IMR-90 (cell line): ENCODE measurements at regions of chr1 and their contacts with region 1.

Region 1: GRCh38 chr1:151254217-151255213 is at the start of gene PSMD4:
- DNase-seq: peak; percentile 96
- ATAC-seq: peak; percentile 92
- H3K4me3 ChIP-seq: peak within 1 kb of the TSS; percentile 67
- H3K27ac ChIP-seq: peak within 1 kb of the TSS; percentile 81
- H3K4me1 ChIP-seq: peaks cover 6% of the 10 kb centered on the region
- H3K27me3 ChIP-seq: no peaks in the 10 kb centered on the region
- CTCF ChIP-seq: no peak
- POLR2A ChIP-seq: peak; percentile 91
- RAD21 ChIP-seq: no peak
- total RNA-seq, gene PSMD4: 289 and 349 TPM in 2 replicates

Region 2: DNA sequence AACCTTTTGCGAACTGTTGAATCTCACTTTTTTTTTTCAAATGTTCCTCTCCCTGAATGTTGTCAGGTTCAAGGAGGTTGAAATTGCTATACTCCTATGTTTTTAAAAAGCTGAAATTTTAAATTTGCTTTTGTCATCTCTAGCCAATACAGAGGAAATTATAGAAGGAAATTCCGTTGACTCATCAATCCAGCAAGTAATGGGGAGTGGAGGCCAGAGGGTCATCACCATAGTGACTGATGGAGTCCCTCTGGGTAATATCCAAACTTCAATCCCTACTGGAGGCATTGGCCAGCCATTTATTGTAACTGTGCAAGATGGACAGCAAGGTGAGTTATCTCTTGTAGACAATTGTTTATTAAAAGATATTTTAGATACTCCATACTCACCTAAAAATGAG is 147.6 kb before region 1 on chr1:
- CTCF ChIA-PET with region 1: interaction called, 3 read pairs
- POLR2A ChIA-PET with region 1: no interaction called
- dilution Hi-C with region 1: no loop called
- in situ Hi-C with region 1: no loop called
- intact Hi-C with region 1: loop called (anchors 10 kb)
- DNase-seq: peak; percentile 68
- ATAC-seq: peak; percentile 71; the same call in 1 of the 2 replicates
- H3K4me3 ChIP-seq: no peak overlapping the region
- H3K27ac ChIP-seq: no peak overlapping the region
- H3K4me1 ChIP-seq: no peaks in the 10 kb centered on the region
- H3K27me3 ChIP-seq: no peaks in the 10 kb centered on the region
- CTCF ChIP-seq: no peak
- POLR2A ChIP-seq: no peak
- RAD21 ChIP-seq: no peak

Region 3: GRCh38 chr1:151198255-151199127 is 56.0 kb before region 1 on chr1 and contains the start of gene PIP5K1A:
- CTCF ChIA-PET with region 1: interaction called, 4 read pairs
- POLR2A ChIA-PET with region 1: no interaction called
- dilution Hi-C with region 1: no loop called
- in situ Hi-C with region 1: loop called (anchors 5 kb)
- intact Hi-C with region 1: loop called (anchors 1 kb)
- DNase-seq: peak; percentile 97
- ATAC-seq: peak; percentile 86
- H3K4me3 ChIP-seq: peak within 1 kb of the TSS; percentile 98
- H3K27ac ChIP-seq: peak within 1 kb of the TSS; percentile 96
- H3K4me1 ChIP-seq: peaks cover 5% of the 10 kb centered on the region; the same call in 1 of the 2 replicates
- H3K27me3 ChIP-seq: no peaks in the 10 kb centered on the region
- CTCF ChIP-seq: no peak
- POLR2A ChIP-seq: peak; percentile 88
- RAD21 ChIP-seq: no peak
- total RNA-seq, gene PIP5K1A: 52.5 and 59.1 TPM in 2 replicates

Region 4: DNA sequence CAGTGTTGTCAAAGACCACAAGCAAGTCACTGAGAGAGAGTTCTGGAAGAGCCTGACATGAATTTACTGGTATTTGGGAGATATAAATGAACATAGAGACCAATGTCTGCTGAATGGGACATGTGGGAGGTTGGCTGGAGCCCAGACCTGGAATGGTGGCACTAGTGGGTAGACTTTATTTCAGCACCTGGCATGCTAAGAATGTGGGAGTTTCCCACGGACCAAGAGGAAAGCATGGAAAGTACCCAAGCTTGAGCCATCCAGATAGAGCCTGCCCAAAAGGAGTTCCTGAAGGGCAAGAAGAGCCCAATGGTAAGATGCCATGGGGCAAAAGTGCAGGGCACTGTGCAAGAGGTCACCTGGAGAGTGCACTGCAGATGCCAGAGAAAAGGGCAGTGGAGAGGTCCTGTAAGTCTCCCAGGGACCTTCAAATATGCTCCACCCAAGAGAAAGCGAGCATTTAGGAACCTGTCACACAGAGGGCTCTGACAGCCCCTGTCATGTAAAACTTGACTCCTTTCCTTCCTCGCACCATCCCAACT is 19.5 kb after region 1 on chr1:
- CTCF ChIA-PET with region 1: no interaction called
- POLR2A ChIA-PET with region 1: interaction called, 21 read pairs
- dilution Hi-C with region 1: no loop called
- in situ Hi-C with region 1: no loop called
- intact Hi-C with region 1: no loop called
- DNase-seq: no peak
- ATAC-seq: no peak
- H3K4me3 ChIP-seq: no peak overlapping the region
- H3K27ac ChIP-seq: no peak overlapping the region
- H3K4me1 ChIP-seq: no peaks in the 10 kb centered on the region
- H3K27me3 ChIP-seq: no peaks in the 10 kb centered on the region
- CTCF ChIP-seq: no peak
- POLR2A ChIP-seq: no peak
- RAD21 ChIP-seq: no peak

Region 5: DNA sequence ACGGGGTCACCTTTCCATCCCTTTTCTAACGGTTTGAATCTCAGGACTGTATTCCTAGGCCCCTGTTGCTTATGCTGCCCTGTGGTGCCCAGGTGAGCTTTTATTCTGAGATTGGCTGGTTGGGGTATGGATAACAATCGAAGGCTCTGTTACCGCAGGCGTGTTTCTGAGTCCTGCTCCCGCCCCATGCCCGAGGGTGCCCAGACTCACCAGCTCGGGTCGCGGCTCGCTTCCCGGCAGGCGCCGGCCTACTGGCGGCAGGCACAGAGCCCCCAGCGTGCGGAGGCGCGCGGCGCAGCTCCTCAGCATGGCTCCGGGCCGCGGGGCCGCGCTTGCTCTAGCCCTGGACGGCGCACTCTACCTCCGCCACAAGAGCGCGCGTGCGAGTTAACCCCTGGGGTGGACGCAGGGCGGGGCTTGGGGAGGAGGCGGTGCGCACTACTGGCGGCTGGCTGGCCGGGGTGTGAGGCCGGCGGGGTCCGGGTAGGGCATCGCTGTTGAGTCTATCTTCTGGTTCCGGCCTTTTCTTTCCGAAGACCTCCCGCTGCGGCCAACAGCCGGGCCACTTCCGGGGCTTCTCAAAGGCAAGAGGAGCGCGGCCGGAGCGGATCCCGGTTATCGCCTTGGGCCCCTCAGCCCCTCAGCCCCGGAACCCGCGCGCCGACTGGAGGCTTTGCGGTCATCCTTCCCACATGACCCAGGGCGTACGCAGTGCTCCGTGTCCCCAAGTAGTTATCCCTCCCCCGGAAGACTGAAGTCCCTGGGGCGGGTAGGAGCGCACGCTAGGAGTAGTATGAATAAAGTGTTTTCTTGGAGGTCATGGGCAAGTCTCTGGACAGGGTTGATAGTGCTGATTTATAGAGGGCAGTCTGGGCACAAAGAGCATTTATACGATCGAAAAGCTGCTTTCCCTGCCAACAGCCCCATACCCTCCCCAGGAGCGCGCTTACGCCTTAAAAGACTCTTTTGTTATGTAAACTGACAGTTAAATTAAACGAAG is 654.9 kb after region 1 on chr1 and contains the start of gene THEM4:
- CTCF ChIA-PET with region 1: no interaction called
- POLR2A ChIA-PET with region 1: no interaction called
- dilution Hi-C with region 1: no loop called
- in situ Hi-C with region 1: no loop called
- intact Hi-C with region 1: no loop called
- DNase-seq: peak; percentile 96
- ATAC-seq: peak; percentile 100
- H3K4me3 ChIP-seq: peak within 1 kb of the TSS; percentile 77
- H3K27ac ChIP-seq: peak within 1 kb of the TSS; percentile 87
- H3K4me1 ChIP-seq: no peaks in the 10 kb centered on the region
- H3K27me3 ChIP-seq: no peaks in the 10 kb centered on the region
- CTCF ChIP-seq: peak; percentile 28; the same call in 1 of the 2 replicates
- POLR2A ChIP-seq: peak; percentile 85
- RAD21 ChIP-seq: no peak
- total RNA-seq, gene THEM4: 7.3 and 8.3 TPM in 2 replicates